GM13977 (cell line): ENCODE measurements at regions of chr3 and their contacts with region 1.

Region 1: GRCh38 chr3:49673715-49674496 is at the start of gene APEH:
- DNase-seq: peak; percentile 99
- CTCF ChIP-seq: no peak

Region 2: DNA sequence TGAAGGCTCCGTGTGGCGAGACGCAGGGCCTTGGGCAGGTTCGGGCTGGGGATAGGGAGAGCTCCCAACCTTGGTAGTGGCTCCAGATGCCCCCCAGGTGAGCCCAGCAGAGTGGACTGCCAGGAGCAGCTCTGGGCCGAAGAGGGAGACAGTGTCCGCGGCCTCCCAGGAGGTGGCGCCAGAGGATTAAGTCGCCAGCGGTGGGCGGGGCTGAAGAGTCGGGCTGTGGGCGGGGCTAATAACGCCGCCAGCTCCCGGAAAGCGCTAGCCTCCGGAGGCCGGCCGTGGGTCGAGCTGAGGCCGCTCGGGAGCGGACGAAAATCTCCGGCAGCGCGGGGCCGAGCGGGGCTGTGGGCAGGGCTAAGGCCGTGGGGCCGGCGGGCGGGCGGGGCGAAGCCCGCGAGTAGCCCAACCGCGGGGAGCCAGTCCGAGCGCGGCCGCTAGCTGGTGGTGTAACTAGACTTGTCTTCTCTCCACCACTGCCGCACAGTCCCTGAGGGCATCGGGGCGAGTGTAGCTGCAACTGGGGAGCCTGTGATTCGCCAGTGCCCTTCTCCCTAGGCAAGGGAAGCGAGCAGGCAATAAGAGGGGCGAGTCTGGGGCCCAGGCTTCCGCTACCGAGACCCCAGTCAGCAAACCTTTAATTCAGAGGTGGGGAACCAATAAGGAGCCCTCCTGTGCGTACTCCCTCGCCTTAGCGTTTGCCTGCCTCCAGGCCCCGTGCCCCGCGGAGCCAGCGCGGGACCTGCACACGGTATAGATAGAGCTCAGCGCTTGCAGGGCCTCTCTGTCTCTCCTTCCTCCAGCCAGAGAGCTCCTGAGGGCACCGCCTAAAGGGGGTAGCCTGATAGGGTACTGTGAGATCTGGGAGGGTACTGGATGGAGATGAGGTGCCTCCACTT is 134.0 kb before region 1 on chr3:
- in situ Hi-C with region 1: loop called (anchors 10 kb)
- DNase-seq: peak; percentile 96
- CTCF ChIP-seq: peak; percentile 96

Region 3: DNA sequence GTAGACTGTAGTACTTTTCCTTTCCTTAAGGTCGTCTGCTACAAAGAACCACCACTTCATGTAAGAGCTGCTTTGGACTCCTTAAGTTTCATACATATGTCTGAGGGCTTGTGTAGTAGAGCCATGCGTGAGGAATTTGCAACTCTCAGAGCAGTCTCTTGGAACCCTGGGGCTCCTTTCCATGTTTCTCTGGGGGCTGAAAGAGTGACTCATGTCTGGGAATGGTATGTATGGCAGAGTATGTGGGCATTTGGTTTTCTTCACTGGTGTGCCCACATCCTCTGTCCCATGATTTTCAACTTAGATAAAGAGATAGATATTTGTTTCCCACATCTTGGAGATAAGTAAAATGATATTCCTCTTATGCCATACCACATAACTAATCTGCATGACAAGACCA is 394.2 kb after region 1 on chr3:
- in situ Hi-C with region 1: no loop called
- DNase-seq: no peak
- CTCF ChIP-seq: no peak